Activated T-helper 1 cell treated with anti-CD3 and anti-CD28 coated beads, Interleukin-12 subunit alpha, Interleukin-12 subunit beta, Interleukin-2, Interleukin-4 antibody, amounts not matched to agents 30 ng/mL and 10 ng/mL and 1 ng/mL, durations not matched to agents 14 hours and 24 hours and 36 hours (primary cell): ENCODE measurements at regions of chr7 and their contacts with region 1.

Region 1: GRCh38 chr7:43808135-43808809 is 49.8 kb downstream of the BLVRA start:
- DNase-seq: no peak
- H3K4me3 Mint-ChIP-seq: no peak overlapping the region
- H3K27ac Mint-ChIP-seq: no peak overlapping the region
- H3K4me1 Mint-ChIP-seq: peaks cover 9% of the 10 kb centered on the region
- H3K27me3 Mint-ChIP-seq: peaks cover 4% of the 10 kb centered on the region

Region 2: DNA sequence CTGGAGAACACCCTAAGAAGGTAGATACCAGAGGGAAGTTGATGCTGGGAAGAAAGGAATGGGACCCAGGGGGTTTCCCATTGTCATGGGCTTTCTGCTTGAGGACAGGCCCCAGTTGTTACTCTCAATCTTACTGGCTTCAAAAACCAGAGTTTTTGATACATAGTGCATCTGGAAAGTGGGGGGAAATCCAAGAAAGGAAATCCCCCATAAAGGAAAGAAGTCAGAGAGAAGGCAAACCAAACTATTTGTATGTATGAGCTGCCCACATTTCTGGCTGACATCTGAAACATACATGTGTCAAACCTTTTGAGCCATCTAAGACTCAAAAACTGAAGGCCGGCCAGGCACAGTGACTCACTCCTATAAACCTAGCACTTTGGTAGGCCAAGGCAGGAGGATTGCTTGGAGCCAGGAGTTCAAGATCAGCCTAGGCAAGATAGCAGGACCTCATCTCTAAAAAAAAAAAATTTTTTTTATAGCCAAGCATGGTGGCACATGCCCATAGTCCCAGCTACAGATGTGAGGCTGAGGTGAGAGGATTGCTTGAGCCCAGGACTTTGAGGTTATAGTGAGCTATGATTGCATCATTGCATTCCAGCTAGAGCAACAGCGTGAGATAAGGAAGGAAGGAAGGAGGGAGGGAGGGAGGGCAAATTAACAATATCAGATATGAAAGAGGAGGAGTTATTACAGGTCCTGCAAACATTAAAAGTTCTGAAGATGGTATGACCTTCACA is 72.3 kb before region 1 on chr7:
- intact Hi-C with region 1: no loop called
- DNase-seq: no peak
- H3K4me3 Mint-ChIP-seq: no peak overlapping the region
- H3K27ac Mint-ChIP-seq: peak overlapping the region; percentile 53
- H3K4me1 Mint-ChIP-seq: peaks cover 24% of the 10 kb centered on the region
- H3K27me3 Mint-ChIP-seq: peaks cover 3% of the 10 kb centered on the region

Region 3: GRCh38 chr7:43824963-43825362 is 16.7 kb after region 1 on chr7:
- intact Hi-C with region 1: loop called (anchors 2 kb)
- DNase-seq: no peak
- H3K4me3 Mint-ChIP-seq: no peak overlapping the region
- H3K27ac Mint-ChIP-seq: no peak overlapping the region
- H3K4me1 Mint-ChIP-seq: no peaks in the 10 kb centered on the region
- H3K27me3 Mint-ChIP-seq: peaks cover 50% of the 10 kb centered on the region